Heart left ventricle (tissue), 16 donors: ENCODE measurements at regions of chr18 and their contacts with region 1.

Region 1: GRCh38 chr18:21489119-21489750 is 111.3 kb downstream of the ESCO1 start:
- DNase-seq: no peak
- ATAC-seq: peak in 3 of 4 donors; percentile 65 to 81 (median 67)
- H3K4me3 ChIP-seq: no peak overlapping the region
- H3K27ac ChIP-seq: no peak overlapping the region
- H3K4me1 ChIP-seq: no peaks in the 10 kb centered on the region
- H3K27me3 ChIP-seq: no peaks in the 10 kb centered on the region
- CTCF ChIP-seq: peak; percentile 52 to 77 (median 67)
- POLR2A ChIP-seq: no peak

Region 2: GRCh38 chr18:21433436-21433835 is 55.8 kb before region 1 on chr18:
- intact Hi-C with region 1: no loop called
- DNase-seq: no peak
- ATAC-seq: no peak
- H3K4me3 ChIP-seq: no peak overlapping the region
- H3K27ac ChIP-seq: no peak overlapping the region
- H3K4me1 ChIP-seq: no peaks in the 10 kb centered on the region
- H3K27me3 ChIP-seq: no peaks in the 10 kb centered on the region
- CTCF ChIP-seq: no peak
- POLR2A ChIP-seq: no peak

Region 3: DNA sequence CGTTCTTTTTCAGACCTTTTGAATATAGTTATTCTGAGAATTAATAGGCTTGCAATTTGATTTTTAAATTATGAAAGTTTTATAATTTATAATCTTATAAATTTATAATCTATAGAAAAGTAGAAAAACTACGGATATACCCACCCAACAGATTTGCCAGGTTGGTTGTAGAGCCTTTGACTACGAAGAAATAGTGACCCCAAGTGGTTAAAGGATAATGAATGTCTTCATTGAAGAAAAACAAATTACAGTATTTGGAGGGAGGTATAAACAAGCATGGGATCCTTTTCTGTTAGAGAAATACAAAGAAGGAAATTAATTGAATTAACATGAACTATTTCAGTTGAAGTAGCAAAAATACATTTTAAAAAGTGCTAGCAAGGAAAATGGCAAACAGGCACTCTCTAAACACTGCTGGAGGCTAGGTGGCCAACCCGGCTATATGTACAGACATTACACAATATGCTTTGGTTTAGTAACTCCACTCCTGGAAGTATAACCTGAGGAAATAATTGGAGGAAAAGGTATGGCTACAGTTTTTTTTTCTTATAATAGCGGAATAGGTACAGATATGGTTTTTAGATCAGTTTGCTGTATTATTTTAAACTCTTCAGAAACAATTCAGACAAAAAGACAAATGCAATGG is 362.2 kb after region 1 on chr18:
- intact Hi-C with region 1: loop called in 5 of 10 experiments (anchors 5 to 10 kb)
- DNase-seq: no peak
- ATAC-seq: peak in 2 of 4 donors; percentile 45 to 63
- H3K4me3 ChIP-seq: no peak overlapping the region
- H3K27ac ChIP-seq: no peak overlapping the region
- H3K4me1 ChIP-seq: peaks cover 0 to 15% (median 0%) of the 10 kb centered on the region in 12 donors
- H3K27me3 ChIP-seq: no peaks in the 10 kb centered on the region
- CTCF ChIP-seq: peak; percentile 25 to 66 (median 44)
- POLR2A ChIP-seq: no peak

Region 4: DNA sequence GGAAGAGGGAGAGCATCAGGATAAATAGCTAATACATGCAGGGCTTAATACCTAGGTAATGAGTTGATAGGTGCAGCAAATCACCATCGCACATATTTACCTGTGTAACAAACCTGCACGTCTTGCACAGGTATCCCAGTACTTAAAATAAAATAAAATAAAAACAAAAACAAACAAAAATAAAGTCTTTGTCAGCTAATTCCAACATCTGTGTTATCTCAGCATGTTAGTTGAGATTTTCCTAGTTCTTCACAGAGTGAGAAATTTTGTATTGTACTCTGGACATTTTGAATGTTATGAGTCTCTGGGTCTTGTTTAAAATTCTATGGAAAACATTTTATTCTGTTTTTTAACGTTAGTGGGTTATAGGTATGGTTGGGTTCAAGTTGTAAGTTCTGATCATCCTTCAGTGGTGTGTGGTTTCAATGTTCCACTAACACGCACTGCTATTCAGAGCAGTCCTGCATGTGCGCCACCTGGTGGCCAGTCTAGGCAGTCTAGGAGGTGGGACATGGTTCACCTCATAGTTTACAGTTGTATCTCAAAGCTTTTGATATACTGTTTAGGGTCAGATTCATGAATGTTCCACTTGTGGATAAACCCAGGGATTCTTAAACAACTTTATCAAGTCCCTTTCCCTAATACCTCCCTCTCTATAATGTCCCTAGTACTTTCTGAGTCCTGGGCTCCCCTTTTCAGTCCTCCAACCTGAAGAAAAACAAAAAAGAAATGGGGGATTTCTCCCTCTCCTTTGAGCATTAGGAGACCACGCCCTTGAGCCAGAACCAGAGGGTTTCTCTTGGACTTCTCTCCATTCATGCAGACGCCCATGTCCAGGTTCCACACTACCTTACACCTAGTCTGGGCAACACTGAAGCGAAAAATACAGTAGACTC is 466.8 kb after region 1 on chr18:
- intact Hi-C with region 1: loop called in 3 of 10 experiments (anchors 2 to 10 kb)
- DNase-seq: peak; percentile 67 to 90 (median 76)
- ATAC-seq: peak; percentile 71 to 94 (median 92)
- H3K4me3 ChIP-seq: no peak overlapping the region
- H3K27ac ChIP-seq: no peak overlapping the region
- H3K4me1 ChIP-seq: peaks cover 0 to 12% (median 0%) of the 10 kb centered on the region in 12 donors
- H3K27me3 ChIP-seq: peaks cover 0 to 3% (median 0%) of the 10 kb centered on the region in 9 donors
- CTCF ChIP-seq: peak; percentile 86 to 95 (median 90)
- POLR2A ChIP-seq: no peak